PC-3 (cell line): ENCODE measurements at regions of chr2 and their contacts with region 1.

Region 1: DNA sequence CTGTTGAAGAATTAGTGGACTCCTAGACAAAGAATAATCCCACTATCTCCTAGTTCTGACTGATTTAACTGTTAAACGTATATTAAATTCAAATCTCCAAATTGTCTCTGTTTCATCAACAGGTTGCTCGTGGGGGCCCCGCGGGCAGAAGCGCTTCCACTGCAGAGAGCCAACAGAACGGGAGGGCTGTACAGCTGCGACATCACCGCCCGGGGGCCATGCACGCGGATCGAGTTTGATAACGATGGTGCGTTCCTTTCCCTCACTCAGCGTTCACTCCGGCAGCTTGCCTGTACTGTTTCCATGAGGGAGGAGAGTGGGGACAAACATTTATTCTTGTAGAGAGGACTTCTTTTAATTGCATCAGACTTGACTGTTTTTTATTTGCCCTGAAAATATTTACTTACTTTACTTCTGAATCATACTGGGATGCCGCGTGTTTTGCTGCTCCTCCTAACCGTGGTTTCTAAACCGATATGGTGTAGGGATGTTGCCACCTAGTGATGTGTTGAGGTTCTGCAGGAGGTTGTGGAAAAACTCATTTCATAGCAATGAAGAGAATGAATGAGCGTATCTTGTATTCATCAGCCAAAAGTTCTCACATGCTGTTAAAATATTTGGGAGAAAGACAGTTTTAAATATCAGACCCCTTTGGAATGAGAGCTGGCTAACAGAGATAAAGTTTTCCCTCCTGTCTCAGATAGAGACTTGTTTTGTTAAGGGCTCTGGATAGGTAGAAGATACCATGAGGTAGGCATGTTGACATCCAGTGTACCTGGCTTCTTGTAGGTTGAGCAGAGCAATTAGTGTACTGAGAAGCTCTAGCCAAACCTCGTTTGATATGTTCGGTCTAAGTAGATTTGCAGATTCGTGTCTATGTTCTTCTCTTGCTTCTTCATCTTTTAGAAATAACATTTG is 38.3 kb downstream of the ITGA6 start:
- DNase-seq: peak; percentile 95
- ATAC-seq: peak; percentile 58
- H3K4me3 ChIP-seq: peak overlapping the region; percentile 58
- H3K27ac ChIP-seq: peak overlapping the region; percentile 73
- H3K4me1 ChIP-seq: peaks cover 49% of the 10 kb centered on the region
- H3K27me3 ChIP-seq: no peaks in the 10 kb centered on the region
- CTCF ChIP-seq: peak; percentile 94

Region 2: DNA sequence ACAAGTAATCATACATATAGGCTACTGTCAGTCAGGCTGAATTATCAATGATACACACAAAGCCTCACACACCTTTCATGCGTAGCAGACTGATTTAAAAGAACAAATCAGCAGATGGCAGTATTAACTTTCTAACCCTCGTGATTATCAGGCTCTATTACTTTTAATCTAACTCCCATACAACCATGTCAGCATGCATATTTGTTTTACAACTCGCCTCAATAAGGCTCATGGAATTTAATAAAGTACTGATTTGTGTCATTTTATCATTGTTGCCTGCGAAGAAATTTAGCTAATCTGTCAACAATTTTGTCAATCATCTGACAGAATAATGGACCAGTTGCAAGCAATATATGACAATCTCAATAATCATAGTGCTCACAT is 654.4 kb before region 1 on chr2:
- CTCF ChIA-PET with region 1: no interaction called
- POLR2A ChIA-PET with region 1: no interaction called
- intact Hi-C with region 1: loop called (anchors 1 kb)
- DNase-seq: peak; percentile 57
- ATAC-seq: peak; percentile 82
- H3K4me3 ChIP-seq: no peak overlapping the region
- H3K27ac ChIP-seq: no peak overlapping the region
- H3K4me1 ChIP-seq: no peaks in the 10 kb centered on the region
- H3K27me3 ChIP-seq: no peaks in the 10 kb centered on the region
- CTCF ChIP-seq: peak; percentile 61

Region 3: DNA sequence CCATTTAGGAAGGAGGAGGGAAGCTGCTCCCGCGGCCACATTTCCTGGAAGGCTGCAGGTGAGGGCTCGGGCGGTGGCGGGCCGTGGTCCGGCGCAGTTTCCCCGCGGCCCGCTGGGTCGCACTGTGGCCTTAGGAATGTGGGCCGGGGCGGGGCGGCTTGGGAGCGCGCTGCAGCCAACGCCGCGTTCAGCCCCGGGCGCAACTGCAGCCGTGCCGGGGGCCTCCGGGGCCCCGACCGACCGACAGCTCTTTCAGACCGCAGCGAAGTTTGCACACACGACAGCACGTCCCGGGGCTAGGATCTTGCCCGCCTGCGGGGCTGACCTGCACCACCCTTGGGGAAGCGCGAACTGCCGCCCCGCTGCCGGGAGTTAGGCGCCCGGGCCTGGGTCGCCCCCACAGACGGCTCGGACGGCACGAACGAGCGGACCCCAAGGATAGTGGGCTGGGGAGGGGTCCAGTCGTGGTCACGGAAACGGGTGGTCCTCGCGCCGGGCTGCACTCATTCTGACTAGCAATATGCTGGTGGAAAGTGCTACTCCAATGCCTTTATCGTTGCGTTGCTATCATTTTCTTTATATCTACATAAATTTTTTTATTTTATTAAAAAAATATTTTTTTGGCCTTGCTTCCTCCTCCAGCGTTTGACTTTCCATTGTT is 293.0 kb before region 1 on chr2:
- CTCF ChIA-PET with region 1: interaction called, 10 read pairs
- POLR2A ChIA-PET with region 1: interaction called, 3 read pairs
- intact Hi-C with region 1: loop called (anchors 1 kb)
- DNase-seq: peak; percentile 85
- ATAC-seq: peak; percentile 96
- H3K4me3 ChIP-seq: peak overlapping the region; percentile 65
- H3K27ac ChIP-seq: peak overlapping the region; percentile 42
- H3K4me1 ChIP-seq: peaks cover 29% of the 10 kb centered on the region
- H3K27me3 ChIP-seq: no peaks in the 10 kb centered on the region
- CTCF ChIP-seq: peak; percentile 85

Region 4: GRCh38 chr2:172299737-172300174 is 165.9 kb before region 1 on chr2:
- CTCF ChIA-PET with region 1: interaction called, 4 read pairs
- POLR2A ChIA-PET with region 1: no interaction called
- intact Hi-C with region 1: loop called (anchors 5 kb)
- DNase-seq: peak; percentile 83
- ATAC-seq: peak; percentile 21
- H3K4me3 ChIP-seq: no peak overlapping the region
- H3K27ac ChIP-seq: peak overlapping the region; percentile 47
- H3K4me1 ChIP-seq: peaks cover 29% of the 10 kb centered on the region
- H3K27me3 ChIP-seq: no peaks in the 10 kb centered on the region
- CTCF ChIP-seq: no peak

Region 5: DNA sequence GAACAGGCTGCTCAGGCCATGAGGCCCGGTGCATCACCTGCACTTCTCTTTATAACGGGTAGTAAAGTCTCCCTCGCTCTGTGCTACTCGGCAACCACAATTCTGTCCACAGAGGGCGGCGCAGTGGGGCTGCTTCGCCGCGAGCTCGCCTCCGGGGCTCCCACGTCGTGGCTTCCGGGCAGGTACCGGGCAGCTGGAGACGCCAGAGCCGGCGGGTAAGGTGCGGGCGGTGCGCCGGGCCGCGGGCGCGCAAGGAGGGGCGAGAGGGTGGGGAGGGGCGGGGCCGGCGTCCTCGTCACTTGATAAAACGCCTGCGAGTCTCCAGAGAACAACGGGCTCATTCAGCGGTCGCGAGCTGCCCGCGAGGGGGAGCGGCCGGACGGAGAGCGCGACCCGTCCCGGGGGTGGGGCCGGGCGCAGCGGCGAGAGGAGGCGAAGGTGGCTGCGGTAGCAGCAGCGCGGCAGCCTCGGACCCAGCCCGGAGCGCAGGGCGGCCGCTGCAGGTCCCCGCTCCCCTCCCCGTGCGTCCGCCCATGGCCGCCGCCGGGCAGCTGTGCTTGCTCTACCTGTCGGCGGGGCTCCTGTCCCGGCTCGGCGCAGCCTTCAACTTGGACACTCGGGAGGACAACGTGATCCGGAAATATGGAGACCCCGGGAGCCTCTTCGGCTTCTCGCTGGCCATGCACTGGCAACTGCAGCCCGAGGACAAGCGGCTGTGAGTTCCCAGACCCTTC is 38.3 kb before region 1 on chr2 and contains the start of gene ITGA6:
- CTCF ChIA-PET with region 1: interaction called, 26 read pairs
- POLR2A ChIA-PET with region 1: interaction called, 3 read pairs
- intact Hi-C with region 1: loop called (anchors 1 kb)
- DNase-seq: peak; percentile 92
- ATAC-seq: peak; percentile 79
- H3K4me3 ChIP-seq: peak within 1 kb of the TSS; percentile 82
- H3K27ac ChIP-seq: peak within 1 kb of the TSS; percentile 64
- H3K4me1 ChIP-seq: peaks cover 29% of the 10 kb centered on the region
- H3K27me3 ChIP-seq: no peaks in the 10 kb centered on the region
- CTCF ChIP-seq: peak; percentile 29; the same call in 1 of the 2 replicates
- total RNA-seq, gene ITGA6: 181 and 204 TPM in 2 replicates